ENCODE measurements at regions of chr1 and their contacts with region 1.

Region 1: DNA sequence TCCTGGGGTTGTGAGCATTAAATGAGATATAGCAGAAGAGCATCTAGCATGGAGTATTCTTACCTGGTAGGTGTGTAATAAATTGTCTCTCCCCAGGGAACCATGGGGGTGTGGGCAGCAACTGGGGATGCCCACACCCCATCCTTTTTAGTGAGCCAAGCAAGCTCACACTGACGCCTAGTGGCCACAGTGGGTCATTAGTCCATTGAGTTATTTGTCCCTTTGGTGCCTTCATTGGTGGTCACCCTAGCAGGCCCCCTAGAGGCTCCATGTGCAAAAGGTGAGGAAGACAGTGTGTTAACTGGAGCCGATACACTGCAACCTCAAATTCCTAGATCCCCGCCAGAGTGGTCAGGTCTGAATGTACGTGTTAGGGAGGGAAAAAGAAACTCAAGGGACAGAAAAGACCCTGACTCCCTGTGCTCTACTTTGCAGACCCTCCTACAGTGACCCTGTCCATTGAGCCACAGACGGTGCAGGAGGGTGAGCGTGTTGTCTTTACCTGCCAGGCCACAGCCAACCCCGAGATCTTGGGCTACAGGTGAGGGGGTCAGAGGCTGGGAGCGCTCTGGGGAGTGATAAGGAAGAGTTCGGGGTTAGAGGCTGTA is 93.3 kb upstream of the CD1D start:
- DNase-seq: peak; percentile 87
- ATAC-seq: peak; percentile 97
- H3K4me3 Mint-ChIP-seq: no peak overlapping the region
- H3K27ac Mint-ChIP-seq: peak overlapping the region; percentile 69
- H3K4me1 Mint-ChIP-seq: peaks cover 8% of the 10 kb centered on the region
- H3K27me3 Mint-ChIP-seq: no peaks in the 10 kb centered on the region
- CTCF ChIP-seq: peak; percentile 94

Region 2: GRCh38 chr1:157963713-157964112 is 123.7 kb before region 1 on chr1:
- CTCF ChIA-PET with region 1: interaction called, 11 read pairs
- POLR2A ChIA-PET with region 1: no interaction called
- DNase-seq: peak; percentile 79
- ATAC-seq: peak; percentile 90
- H3K4me3 Mint-ChIP-seq: no peak overlapping the region
- H3K27ac Mint-ChIP-seq: no peak overlapping the region
- H3K4me1 Mint-ChIP-seq: peaks cover 14% of the 10 kb centered on the region
- H3K27me3 Mint-ChIP-seq: peaks cover 3% of the 10 kb centered on the region; the same call in 1 of the 2 replicates
- CTCF ChIP-seq: peak; percentile 89

Region 3: DNA sequence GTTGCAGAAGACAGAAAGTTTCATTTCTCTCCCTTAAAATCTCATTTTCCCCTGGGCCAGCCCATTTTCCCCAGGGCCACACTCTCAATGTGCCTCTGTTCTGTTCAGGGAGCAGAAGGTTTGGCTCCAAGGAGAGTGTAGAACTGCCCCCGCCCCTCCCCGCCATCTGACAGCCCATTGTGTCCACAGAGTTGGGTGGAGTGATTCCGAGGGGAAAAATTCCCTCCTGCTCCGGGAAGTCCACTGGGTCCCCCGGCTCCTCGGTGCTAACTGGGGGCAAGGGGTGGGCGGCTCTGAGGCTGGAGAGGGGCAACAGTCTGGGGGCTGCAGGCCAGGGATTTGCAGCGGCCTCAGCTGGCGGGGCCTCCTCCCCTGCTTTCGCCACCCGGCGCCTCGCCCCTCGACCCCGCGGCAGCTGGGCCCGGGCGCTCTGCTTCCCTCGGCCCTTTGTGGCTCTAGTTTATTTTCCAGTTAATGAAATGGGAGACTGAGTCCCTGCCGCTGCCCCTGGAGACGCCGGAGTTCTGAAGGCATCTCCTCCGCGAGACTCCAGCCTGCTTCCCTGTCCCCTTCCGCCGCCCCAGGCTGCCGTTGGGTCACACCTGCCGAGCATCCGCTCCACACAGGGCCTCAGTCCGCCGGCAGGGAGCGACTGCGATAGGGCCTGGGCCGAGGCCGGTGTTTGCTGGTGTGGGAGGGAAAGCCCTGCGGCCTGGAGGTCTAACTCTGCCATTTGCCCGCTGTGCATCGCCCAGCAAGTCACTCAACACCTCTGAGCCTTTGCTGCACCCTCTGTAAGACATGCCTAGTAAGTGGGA is 108.6 kb before region 1 on chr1:
- CTCF ChIA-PET with region 1: interaction called, 11 read pairs
- POLR2A ChIA-PET with region 1: no interaction called
- DNase-seq: peak; percentile 78
- ATAC-seq: peak; percentile 89
- H3K4me3 Mint-ChIP-seq: peak overlapping the region; percentile 49
- H3K27ac Mint-ChIP-seq: peak overlapping the region; percentile 31; the same call in 1 of the 2 replicates
- H3K4me1 Mint-ChIP-seq: peaks cover 60% of the 10 kb centered on the region
- H3K27me3 Mint-ChIP-seq: no peaks in the 10 kb centered on the region; the same call in 1 of the 2 replicates
- CTCF ChIP-seq: no peak

Region 4: DNA sequence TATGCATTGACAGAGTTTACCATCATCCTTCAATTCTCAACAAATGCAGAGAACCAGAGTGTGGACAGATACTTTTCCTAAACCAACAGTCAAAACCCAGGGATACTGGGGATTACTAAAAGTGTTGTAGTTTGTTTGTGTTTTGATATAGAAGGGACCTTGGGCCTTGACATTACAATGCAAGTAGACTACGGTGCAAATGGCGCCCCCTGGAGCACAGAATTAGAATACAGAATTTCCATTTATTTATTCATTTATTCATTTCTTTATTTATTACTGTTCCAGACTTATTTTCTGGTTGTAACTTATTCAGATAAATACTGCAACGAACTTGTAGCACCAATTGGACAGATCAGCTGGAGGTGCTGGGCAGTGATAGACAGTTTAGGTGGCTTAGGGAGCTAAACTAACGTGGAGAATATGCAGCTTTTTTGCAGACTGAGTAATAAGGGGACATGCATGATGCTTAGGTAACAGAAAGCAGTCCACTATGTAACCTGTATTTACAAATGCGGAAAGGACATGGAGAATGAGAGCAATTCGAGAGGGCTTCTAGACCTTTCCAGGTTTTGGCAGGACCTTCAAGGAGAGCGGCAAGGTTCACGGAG is 51.3 kb before region 1 on chr1:
- CTCF ChIA-PET with region 1: interaction called, 11 read pairs
- POLR2A ChIA-PET with region 1: no interaction called
- DNase-seq: no peak
- ATAC-seq: no peak
- H3K4me3 Mint-ChIP-seq: no peak overlapping the region
- H3K27ac Mint-ChIP-seq: no peak overlapping the region
- H3K4me1 Mint-ChIP-seq: peaks cover 47% of the 10 kb centered on the region
- H3K27me3 Mint-ChIP-seq: no peaks in the 10 kb centered on the region
- CTCF ChIP-seq: peak; percentile 79

Region 5: GRCh38 chr1:158075078-158075477 is 12.3 kb before region 1 on chr1:
- CTCF ChIA-PET with region 1: interaction called, 29 read pairs
- POLR2A ChIA-PET with region 1: interaction called, 3 read pairs
- DNase-seq: no peak
- ATAC-seq: no peak
- H3K4me3 Mint-ChIP-seq: no peak overlapping the region
- H3K27ac Mint-ChIP-seq: no peak overlapping the region
- H3K4me1 Mint-ChIP-seq: peaks cover 79% of the 10 kb centered on the region
- H3K27me3 Mint-ChIP-seq: no peaks in the 10 kb centered on the region
- CTCF ChIP-seq: no peak

Region 6: GRCh38 chr1:158188611-158189010 is 101.2 kb after region 1 on chr1:
- CTCF ChIA-PET with region 1: no interaction called
- POLR2A ChIA-PET with region 1: no interaction called
- DNase-seq: no peak
- ATAC-seq: no peak
- H3K4me3 Mint-ChIP-seq: no peak overlapping the region
- H3K27ac Mint-ChIP-seq: no peak overlapping the region
- H3K4me1 Mint-ChIP-seq: peaks cover 51% of the 10 kb centered on the region
- H3K27me3 Mint-ChIP-seq: peaks cover 13% of the 10 kb centered on the region
- CTCF ChIP-seq: no peak

Measured in WTC11 (cell line).